Posterior cingulate gyrus (tissue), 11 donors: ENCODE measurements at regions of chr2 and their contacts with region 1.

Region 1: GRCh38 chr2:137838255-137839092 is 125.8 kb upstream of the HNMT start:
- DNase-seq: no peak

Region 2: GRCh38 chr2:136423516-136423996 is 1414.9 kb before region 1 on chr2:
- intact Hi-C with region 1: loop called (anchors 5 kb)
- DNase-seq: peak; percentile 42 to 93 (median 72)

Region 3: DNA sequence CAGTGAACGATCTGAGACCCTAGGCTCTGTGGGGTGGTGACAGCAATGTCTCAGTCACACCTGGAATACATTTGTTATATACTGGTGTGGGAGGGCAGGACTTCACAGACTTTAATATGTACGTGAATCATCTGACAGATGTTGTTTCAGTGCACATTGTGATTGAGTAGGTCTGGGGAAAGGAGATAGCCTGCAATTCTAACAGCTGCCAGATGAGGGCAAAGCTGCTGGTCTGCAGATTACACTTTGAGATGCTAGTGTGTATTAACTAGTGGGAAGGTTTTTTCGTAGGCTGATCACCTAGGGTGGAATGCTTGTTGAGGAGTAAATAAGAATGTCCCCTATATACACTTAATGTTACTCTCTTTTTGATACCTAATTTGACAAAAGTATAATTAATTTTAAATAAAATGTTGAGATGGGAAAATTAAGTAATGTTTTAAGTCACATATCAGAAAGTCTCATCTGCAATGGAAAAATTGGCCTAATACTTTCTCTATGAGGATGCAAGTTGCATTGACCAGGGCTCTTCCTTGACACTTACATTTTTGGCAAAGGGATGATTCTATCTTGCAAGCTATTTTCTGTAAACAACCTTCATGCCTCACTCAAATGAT is 371.1 kb before region 1 on chr2:
- intact Hi-C with region 1: loop called (anchors 5 kb)
- DNase-seq: peak in 5 of 10 donors; percentile 12 to 79 (median 26)

Region 4: DNA sequence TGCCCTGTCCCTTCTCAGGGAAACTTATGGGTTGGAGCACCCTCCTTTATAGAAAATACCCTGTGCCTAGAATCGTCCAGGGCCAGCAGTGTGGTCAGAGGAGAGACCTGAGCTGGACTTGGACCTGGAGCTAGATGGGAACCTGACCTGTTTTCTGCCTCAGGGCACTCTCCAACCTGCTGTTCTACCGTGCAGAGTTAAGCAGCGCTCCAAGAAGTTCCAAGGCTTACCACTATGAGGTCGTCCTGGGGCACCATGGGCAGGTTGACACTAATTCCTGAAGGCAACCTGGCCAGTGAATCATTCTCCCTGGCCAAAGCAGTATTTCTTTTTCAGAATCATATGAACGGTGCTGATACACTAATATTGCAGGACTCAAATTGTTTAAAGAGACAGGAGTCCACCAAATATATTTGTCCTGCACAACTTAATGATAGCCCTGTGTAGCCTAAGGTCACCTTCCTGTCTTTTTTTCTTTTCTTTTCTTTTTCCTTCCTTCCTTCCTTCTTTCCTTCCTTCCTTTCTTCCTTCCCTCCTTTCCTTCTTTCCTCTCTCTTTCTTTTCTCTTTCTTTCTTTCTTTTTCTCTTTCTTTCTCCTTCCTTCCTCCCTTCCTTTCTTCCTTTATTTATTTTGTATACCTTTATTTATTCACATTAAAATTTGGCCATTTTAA is 329.6 kb before region 1 on chr2:
- intact Hi-C with region 1: loop called (anchors 5 kb)
- DNase-seq: no peak

Region 5: DNA sequence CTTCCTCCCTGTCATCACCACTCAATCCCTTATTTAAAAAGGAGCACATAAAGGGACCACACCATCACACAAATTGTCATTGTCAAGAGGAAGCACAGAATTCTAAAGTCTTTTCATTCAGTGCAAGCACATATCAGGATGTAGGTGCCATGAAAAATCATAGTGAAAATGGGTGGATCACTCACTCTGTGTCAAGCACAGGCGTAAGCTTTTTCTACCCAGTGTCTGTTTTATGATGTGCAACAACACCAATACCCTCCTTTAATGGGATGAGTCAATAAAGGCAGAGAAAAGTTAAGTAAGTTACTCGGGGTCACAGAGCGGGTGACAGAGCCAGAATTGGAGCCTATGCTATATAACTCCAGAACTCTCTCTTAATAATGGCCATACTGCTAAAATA is 96.5 kb before region 1 on chr2:
- intact Hi-C with region 1: no loop called
- DNase-seq: no peak

Region 6: DNA sequence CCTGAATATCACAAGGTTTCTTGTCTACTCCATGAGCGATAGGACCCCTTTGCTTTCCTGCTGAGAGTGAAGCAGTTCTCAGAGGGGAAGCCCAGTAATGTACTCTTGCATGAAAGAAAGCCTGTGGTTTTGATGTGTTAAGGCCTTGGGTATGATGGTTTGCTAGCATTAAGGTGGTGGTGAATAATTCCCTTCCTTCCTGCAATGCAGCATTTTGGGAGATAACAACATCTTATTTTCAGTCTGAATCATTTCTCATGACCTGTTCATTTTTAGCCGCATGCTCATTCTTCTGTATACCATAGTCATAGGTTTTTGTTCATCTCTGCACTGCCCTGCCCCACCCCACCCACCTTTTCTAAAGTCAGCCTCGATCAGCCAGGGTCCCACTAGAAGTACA is 192.0 kb after region 1 on chr2:
- intact Hi-C with region 1: no loop called
- DNase-seq: no peak